ENCODE measurements at regions of chr4 and their contacts with region 1.

Region 1: GRCh38 chr4:36244257-36245079 is at the start of gene ARAP2:
- DNase-seq: peak; percentile 85
- ATAC-seq: peak; percentile 77
- H3K4me3 Mint-ChIP-seq: peak within 1 kb of the TSS; percentile 84
- H3K27ac Mint-ChIP-seq: peak within 1 kb of the TSS; percentile 94
- H3K4me1 Mint-ChIP-seq: peaks cover 37% of the 10 kb centered on the region
- H3K27me3 Mint-ChIP-seq: no peaks in the 10 kb centered on the region
- CTCF ChIP-seq: no peak
- total RNA-seq, gene ARAP2: 30.0 to 31.0 TPM

Region 2: DNA sequence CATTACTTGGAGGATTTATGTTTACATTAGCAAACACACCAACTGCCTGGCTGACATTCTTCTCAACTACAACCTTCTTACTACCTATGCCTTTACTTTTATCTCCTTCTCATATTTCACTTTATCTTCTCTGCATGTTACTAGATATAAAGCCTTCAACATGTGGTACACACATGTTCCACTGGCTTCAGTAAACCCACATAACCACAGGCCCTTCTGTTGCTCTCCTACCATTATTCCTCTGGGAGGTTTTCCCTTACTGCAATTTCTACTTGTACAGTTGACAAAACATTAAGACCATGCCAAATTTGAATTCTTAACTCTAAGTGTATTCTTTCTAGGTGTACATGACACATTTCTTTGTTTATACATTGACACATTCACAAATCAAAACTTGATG is 133.3 kb before region 1 on chr4:
- CTCF ChIA-PET with region 1: no interaction called
- POLR2A ChIA-PET with region 1: no interaction called
- intact Hi-C with region 1: no loop called
- DNase-seq: no peak
- ATAC-seq: no peak
- H3K4me3 Mint-ChIP-seq: no peak overlapping the region
- H3K27ac Mint-ChIP-seq: peak overlapping the region; percentile 13
- H3K4me1 Mint-ChIP-seq: no peaks in the 10 kb centered on the region
- H3K27me3 Mint-ChIP-seq: no peaks in the 10 kb centered on the region
- CTCF ChIP-seq: no peak

Region 3: GRCh38 chr4:36187723-36188333 is 56.6 kb before region 1 on chr4:
- CTCF ChIA-PET with region 1: interaction called, 5 read pairs
- POLR2A ChIA-PET with region 1: interaction called, 4 read pairs
- intact Hi-C with region 1: loop called (anchors 5 kb)
- DNase-seq: peak; percentile 43
- ATAC-seq: no peak
- H3K4me3 Mint-ChIP-seq: no peak overlapping the region
- H3K27ac Mint-ChIP-seq: no peak overlapping the region
- H3K4me1 Mint-ChIP-seq: peaks cover 31% of the 10 kb centered on the region
- H3K27me3 Mint-ChIP-seq: no peaks in the 10 kb centered on the region
- CTCF ChIP-seq: peak; percentile 69

Region 4: GRCh38 chr4:36224972-36225903 is 19.2 kb before region 1 on chr4:
- CTCF ChIA-PET with region 1: interaction called, 12 read pairs
- POLR2A ChIA-PET with region 1: interaction called, 4 read pairs
- intact Hi-C with region 1: no loop called
- DNase-seq: no peak
- ATAC-seq: no peak
- H3K4me3 Mint-ChIP-seq: no peak overlapping the region
- H3K27ac Mint-ChIP-seq: peak overlapping the region; percentile 37
- H3K4me1 Mint-ChIP-seq: peaks cover 75% of the 10 kb centered on the region
- H3K27me3 Mint-ChIP-seq: no peaks in the 10 kb centered on the region
- CTCF ChIP-seq: no peak

Region 5: GRCh38 chr4:36269101-36269500 is 24.6 kb after region 1 on chr4:
- CTCF ChIA-PET with region 1: interaction called, 12 read pairs
- POLR2A ChIA-PET with region 1: interaction called, 20 read pairs
- intact Hi-C with region 1: no loop called
- DNase-seq: peak; percentile 79
- ATAC-seq: peak; percentile 88
- H3K4me3 Mint-ChIP-seq: no peak overlapping the region
- H3K27ac Mint-ChIP-seq: peak overlapping the region; percentile 79
- H3K4me1 Mint-ChIP-seq: peaks cover 53% of the 10 kb centered on the region
- H3K27me3 Mint-ChIP-seq: no peaks in the 10 kb centered on the region
- CTCF ChIP-seq: no peak

Region 6: GRCh38 chr4:36325499-36325898 is 81.0 kb after region 1 on chr4:
- CTCF ChIA-PET with region 1: interaction called, 6 read pairs
- POLR2A ChIA-PET with region 1: interaction called, 22 read pairs
- intact Hi-C with region 1: loop called (anchors 5 kb)
- DNase-seq: no peak
- ATAC-seq: peak; percentile 51
- H3K4me3 Mint-ChIP-seq: peak overlapping the region; percentile 5
- H3K27ac Mint-ChIP-seq: peak overlapping the region; percentile 74
- H3K4me1 Mint-ChIP-seq: peaks cover 62% of the 10 kb centered on the region
- H3K27me3 Mint-ChIP-seq: no peaks in the 10 kb centered on the region
- CTCF ChIP-seq: no peak

Region 7: DNA sequence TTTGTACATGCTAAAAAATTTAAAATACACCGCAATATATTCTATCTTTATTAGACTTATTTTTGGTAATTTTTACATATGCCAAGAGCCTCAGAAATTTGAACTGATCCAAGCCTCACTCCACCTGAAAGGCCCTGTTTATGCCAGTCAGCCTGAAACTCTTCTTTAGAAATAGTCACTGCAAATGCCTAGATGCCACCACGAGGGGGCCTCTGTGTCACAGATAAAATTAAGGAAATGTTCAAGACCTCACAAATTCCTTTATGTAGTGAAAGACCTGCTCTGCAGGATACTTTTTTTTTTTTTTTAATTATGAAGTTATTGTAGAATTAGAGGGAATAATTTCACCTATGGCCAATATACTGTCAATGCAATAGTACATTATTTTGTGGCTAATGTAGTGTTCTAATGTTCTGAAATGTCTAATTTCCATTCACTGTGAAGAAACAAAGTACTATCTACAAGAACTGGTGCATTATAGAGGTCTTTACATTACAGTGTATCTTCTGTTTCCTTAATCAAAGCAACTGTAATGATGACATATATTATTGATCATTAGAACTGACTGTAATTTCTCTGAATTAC is 106.7 kb after region 1 on chr4:
- CTCF ChIA-PET with region 1: interaction called, 17 read pairs
- POLR2A ChIA-PET with region 1: interaction called, 13 read pairs
- intact Hi-C with region 1: no loop called
- DNase-seq: peak; percentile 91
- ATAC-seq: peak; percentile 65
- H3K4me3 Mint-ChIP-seq: no peak overlapping the region
- H3K27ac Mint-ChIP-seq: no peak overlapping the region
- H3K4me1 Mint-ChIP-seq: peaks cover 32% of the 10 kb centered on the region
- H3K27me3 Mint-ChIP-seq: no peaks in the 10 kb centered on the region
- CTCF ChIP-seq: peak; percentile 92

Measured in activated CD8-positive, alpha-beta T cell treated with anti-CD3 and anti-CD28 coated beads for 36 hours (primary cell).